PC-3 (cell line): ENCODE measurements at regions of chr9 and their contacts with region 1.

Region 1: GRCh38 chr9:70639853-70640814 is 225.7 kb upstream of the KLF9 start:
- DNase-seq: peak; percentile 65
- ATAC-seq: no peak
- H3K4me3 ChIP-seq: no peak overlapping the region
- H3K27ac ChIP-seq: no peak overlapping the region
- H3K4me1 ChIP-seq: no peaks in the 10 kb centered on the region
- H3K27me3 ChIP-seq: no peaks in the 10 kb centered on the region
- CTCF ChIP-seq: peak; percentile 71

Region 2: GRCh38 chr9:71001780-71002386 is 361.7 kb after region 1 on chr9:
- CTCF ChIA-PET with region 1: no interaction called
- POLR2A ChIA-PET with region 1: no interaction called
- intact Hi-C with region 1: loop called (anchors 5 kb)
- DNase-seq: peak; percentile 41
- ATAC-seq: no peak
- H3K4me3 ChIP-seq: no peak overlapping the region
- H3K27ac ChIP-seq: no peak overlapping the region
- H3K4me1 ChIP-seq: no peaks in the 10 kb centered on the region
- H3K27me3 ChIP-seq: no peaks in the 10 kb centered on the region
- CTCF ChIP-seq: peak; percentile 63; the same call in 1 of the 2 replicates

Region 3: GRCh38 chr9:71162126-71162525 is 522.0 kb after region 1 on chr9:
- CTCF ChIA-PET with region 1: interaction called, 10 read pairs
- POLR2A ChIA-PET with region 1: no interaction called
- intact Hi-C with region 1: no loop called
- DNase-seq: no peak
- ATAC-seq: no peak
- H3K4me3 ChIP-seq: no peak overlapping the region
- H3K27ac ChIP-seq: no peak overlapping the region
- H3K4me1 ChIP-seq: no peaks in the 10 kb centered on the region
- H3K27me3 ChIP-seq: no peaks in the 10 kb centered on the region
- CTCF ChIP-seq: no peak

Region 4: GRCh38 chr9:71249729-71250317 is 609.7 kb after region 1 on chr9:
- CTCF ChIA-PET with region 1: no interaction called
- POLR2A ChIA-PET with region 1: no interaction called
- intact Hi-C with region 1: loop called (anchors 1 kb)
- DNase-seq: peak; percentile 74
- ATAC-seq: peak; percentile 49
- H3K4me3 ChIP-seq: no peak overlapping the region
- H3K27ac ChIP-seq: no peak overlapping the region
- H3K4me1 ChIP-seq: no peaks in the 10 kb centered on the region
- H3K27me3 ChIP-seq: no peaks in the 10 kb centered on the region
- CTCF ChIP-seq: peak; percentile 84